Motor neuron (in vitro differentiated cells): ENCODE measurements at regions of chr11 and their contacts with region 1.

Region 1: GRCh38 chr11:119334174-119334930 is at the start of gene RNF26:
- ATAC-seq: peak; percentile 88 to 94 (median 90)
- H3K4me3 ChIP-seq: peak within 1 kb of the TSS; percentile 79 to 99 (median 97)
- H3K27ac ChIP-seq: peak within 1 kb of the TSS; percentile 79 to 81
- H3K4me1 ChIP-seq: peaks cover 28 to 29% of the 10 kb centered on the region in 2 donors
- total RNA-seq, gene RNF26: 5.7 to 26.5 (median 10.9) TPM

Region 2: DNA sequence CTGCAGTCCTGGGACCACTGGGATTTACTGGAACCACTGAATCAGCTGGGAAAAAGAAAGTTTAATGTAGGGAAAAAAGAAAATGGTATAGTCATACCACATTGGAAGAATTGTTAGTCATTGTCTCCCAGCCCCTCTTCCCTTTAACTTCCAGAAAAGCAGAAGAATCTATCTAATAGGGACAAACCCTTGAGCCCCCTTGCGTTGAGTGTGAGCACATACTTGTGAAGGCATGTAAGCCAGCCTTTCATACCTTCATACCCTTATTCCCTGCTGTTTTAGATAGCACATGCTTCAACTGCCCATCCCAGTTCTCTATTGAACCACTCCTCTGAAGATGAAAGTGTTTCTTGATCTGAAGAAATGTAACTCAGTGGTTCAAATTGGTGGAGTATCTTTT is 661.5 kb before region 1 on chr11:
- in situ Hi-C with region 1: no loop called
- ATAC-seq: peak in 3 of 8 experiments; percentile 71 to 89 (median 83)
- H3K4me3 ChIP-seq: no peak overlapping the region
- H3K27ac ChIP-seq: no peak overlapping the region
- H3K4me1 ChIP-seq: no peaks in the 10 kb centered on the region

Region 3: DNA sequence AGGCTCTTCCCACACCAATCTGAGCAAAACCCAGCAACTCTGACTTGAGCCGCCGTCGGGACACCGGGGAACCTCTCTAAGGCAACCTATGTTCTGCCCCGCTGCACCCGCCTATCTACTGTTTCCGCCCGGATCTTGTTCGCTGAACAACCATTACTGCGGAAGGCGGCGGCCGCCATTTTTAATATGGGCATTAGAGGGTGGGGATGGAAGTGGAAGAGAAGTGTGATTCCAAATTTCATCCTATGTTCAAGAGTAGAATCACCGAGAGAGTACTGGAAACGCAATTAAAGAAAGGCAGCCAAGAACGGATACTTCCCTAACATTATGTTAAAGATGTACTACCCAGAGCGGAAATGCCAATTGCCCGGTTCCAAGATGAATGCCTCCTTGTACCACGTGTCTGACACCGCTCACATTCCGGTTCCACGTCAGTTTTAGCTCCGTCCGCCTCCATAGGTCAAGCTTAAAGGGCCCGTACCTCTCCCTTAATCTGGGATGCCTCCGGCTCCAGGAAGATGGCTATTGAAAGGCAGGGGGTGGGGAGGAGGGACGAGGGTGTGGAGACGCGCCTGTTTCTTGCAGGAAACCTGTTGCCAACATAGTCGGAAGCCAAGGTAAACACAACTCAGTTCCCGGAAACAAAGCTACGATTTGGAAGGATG is 232.5 kb before region 1 on chr11 and contains the start of gene DPAGT1:
- in situ Hi-C with region 1: loop called in 2 of 9 experiments (anchors 10 to 25 kb)
- ATAC-seq: peak; percentile 81 to 88 (median 86)
- H3K4me3 ChIP-seq: peak within 1 kb of the TSS; percentile 68 to 95 (median 80)
- H3K27ac ChIP-seq: peak within 1 kb of the TSS; percentile 99
- H3K4me1 ChIP-seq: peaks cover 38 to 46% of the 10 kb centered on the region in 2 donors
- total RNA-seq, gene DPAGT1: 22.1 to 58.9 (median 36.5) TPM

Region 4: DNA sequence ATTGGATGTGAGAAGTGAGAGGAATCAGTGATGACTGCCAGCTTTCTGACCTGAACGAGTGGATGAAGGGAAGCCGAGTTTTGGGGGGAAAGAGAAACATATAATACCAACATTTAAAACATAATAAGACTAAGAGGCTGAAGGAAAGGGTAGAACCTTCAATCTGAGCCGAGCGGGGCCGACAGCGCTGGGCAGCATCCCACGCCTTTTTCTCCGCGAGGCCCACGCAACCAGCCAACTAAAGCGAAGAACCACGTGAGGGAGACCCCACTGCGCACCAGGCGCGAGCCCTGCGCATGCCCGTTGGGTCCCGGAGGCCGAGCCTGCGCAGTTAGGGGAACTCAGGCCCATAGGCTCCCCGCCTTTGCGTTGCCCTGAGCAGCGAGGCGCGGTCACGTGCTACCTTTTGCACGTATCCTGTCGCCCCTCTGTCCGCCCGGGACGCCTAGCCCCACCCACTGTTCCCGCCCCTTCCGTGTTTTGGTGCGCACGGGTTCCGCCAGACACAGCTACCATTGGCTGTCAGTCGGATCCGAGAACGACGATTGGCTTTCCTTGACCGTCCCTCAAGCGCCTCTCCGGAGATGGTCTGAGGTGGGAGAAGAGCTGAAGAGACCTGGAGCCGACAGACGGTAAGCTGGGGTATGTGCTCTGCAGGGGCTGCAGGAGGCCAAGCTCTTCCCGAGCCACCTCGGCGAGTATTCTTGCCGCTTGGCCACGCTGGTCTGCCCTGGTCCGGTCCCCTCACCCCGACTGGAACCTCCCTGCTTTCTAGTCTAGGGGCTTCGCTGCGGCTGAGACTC is 213.1 kb before region 1 on chr11 and contains the start of gene HINFP:
- in situ Hi-C with region 1: loop called in 1 of 9 experiments (anchors 25 kb)
- ATAC-seq: peak; percentile 92 to 96 (median 95)
- H3K4me3 ChIP-seq: peak within 1 kb of the TSS; percentile 60 to 93 (median 71)
- H3K27ac ChIP-seq: peak within 1 kb of the TSS; percentile 71 to 80
- H3K4me1 ChIP-seq: peaks cover 10 to 14% of the 10 kb centered on the region in 2 donors
- total RNA-seq, gene HINFP: 13.0 to 34.0 (median 28.2) TPM

Region 5: GRCh38 chr11:119157063-119157462 is 177.3 kb before region 1 on chr11:
- in situ Hi-C with region 1: no loop called
- ATAC-seq: no peak
- H3K4me3 ChIP-seq: no peak overlapping the region
- H3K27ac ChIP-seq: no peak overlapping the region
- H3K4me1 ChIP-seq: no peaks in the 10 kb centered on the region